MCF 10A (cell line): ENCODE measurements at regions of chr12 and their contacts with region 1.

Region 1: DNA sequence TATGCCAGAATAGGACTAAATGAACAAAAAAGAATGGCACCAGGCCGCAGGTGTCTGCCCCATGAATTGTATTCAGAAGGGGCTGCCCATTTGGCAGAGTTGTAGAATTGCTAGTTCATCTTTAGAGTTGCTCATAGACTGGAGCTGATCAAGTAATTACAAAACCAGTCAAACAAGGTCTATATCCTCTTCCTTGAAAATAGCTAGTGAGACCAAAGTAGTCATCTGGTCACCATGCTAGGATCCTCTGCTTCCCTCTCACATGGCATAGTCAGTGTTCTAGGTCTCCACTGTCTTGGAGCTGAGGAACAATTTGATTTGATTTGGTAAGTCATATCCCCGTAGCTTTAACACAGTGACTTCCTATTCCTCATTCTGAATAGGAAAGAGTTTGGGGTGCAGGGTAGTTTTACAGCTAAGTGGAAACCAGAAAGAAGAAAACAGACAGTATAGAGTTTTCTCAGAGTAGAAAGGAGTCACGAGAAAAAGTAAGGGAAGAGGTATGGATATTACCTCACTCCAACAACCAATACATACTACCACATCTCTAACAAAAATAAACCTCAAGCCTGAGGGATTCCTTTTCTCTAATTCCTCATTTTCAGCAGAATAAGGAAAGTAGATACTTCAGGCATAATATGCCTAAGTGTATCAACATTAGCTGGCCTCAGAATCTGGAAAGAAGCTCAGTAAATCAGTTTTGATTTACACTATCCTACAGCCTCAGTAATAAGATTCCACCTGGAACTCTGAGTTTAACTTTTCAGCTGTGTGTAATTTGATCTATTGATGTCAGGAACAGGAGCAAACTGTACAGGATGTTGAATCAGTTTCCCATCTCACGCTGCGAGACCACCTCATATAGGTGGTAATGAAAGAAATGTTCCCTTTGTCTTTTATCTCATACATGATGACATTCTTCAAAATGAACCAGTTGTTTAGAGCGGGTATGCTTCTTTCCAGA is 252.0 kb downstream of the PAWR start:
- DNase-seq: no peak
- H3K4me3 Mint-ChIP-seq: no peak overlapping the region
- H3K27ac Mint-ChIP-seq: no peak overlapping the region
- H3K4me1 Mint-ChIP-seq: peaks cover 8% of the 10 kb centered on the region
- H3K27me3 Mint-ChIP-seq: no peaks in the 10 kb centered on the region
- CTCF ChIP-seq: no peak

Region 2: GRCh38 chr12:79426121-79426520 is 12.7 kb before region 1 on chr12:
- CTCF ChIA-PET with region 1: interaction called, 32 read pairs
- POLR2A ChIA-PET with region 1: interaction called, 4 read pairs
- intact Hi-C with region 1: no loop called
- DNase-seq: no peak
- H3K4me3 Mint-ChIP-seq: no peak overlapping the region
- H3K27ac Mint-ChIP-seq: no peak overlapping the region
- H3K4me1 Mint-ChIP-seq: peaks cover 26% of the 10 kb centered on the region
- H3K27me3 Mint-ChIP-seq: no peaks in the 10 kb centered on the region
- CTCF ChIP-seq: no peak